PC-3 (cell line): ENCODE measurements at regions of chr6 and their contacts with region 1.

Region 1: DNA sequence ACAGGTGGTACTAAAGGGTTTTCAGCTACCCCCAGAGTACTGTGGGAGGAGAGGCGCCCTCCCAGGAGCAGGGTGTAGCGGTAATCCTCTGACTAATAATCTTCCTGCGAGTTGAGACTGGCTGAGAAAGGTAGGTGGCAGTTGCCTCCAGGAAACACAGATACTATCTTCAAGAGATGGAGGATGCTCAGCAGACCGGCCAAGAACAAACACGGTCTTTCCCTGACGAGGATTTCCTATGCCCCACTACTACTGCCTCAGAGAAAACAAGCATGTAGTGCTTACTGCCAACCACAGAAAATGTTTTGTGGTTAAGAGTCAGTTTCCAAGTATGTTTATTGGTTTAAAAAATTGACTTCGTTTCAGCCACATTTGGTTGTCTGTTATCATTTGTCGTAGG is 26.8 kb downstream of the C6orf89 start:
- DNase-seq: peak; percentile 96
- ATAC-seq: peak; percentile 88
- H3K4me3 ChIP-seq: peak overlapping the region; percentile 35; the same call in 1 of the 2 replicates
- H3K27ac ChIP-seq: peak overlapping the region; percentile 66
- H3K4me1 ChIP-seq: peaks cover 52% of the 10 kb centered on the region
- H3K27me3 ChIP-seq: no peaks in the 10 kb centered on the region
- CTCF ChIP-seq: peak; percentile 40; the same call in 1 of the 2 replicates

Region 2: DNA sequence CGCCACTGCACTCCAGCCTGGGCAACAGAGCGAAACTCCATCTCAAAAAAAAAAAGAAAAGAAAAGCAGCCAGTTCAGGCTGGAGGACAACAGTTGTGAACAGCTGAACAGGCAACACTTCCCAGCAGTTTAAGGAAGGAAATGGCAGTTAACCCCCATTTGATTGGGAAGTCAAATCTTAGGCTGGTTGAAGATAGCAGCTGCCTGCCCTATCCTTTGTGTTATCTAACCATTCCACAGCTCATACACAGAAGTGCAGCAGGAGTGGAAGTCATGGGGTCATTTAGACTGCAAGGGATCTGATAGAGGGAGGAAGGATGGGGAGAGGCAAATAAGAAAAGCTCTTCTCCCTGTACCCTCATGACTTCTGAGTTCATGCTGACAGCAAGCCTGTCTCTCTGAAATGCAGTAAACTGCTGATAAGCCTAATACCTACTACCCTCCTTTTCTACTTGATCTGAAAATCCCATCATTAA is 434.5 kb before region 1 on chr6:
- CTCF ChIA-PET with region 1: no interaction called
- POLR2A ChIA-PET with region 1: no interaction called
- intact Hi-C with region 1: no loop called
- DNase-seq: no peak
- ATAC-seq: no peak
- H3K4me3 ChIP-seq: no peak overlapping the region
- H3K27ac ChIP-seq: no peak overlapping the region
- H3K4me1 ChIP-seq: no peaks in the 10 kb centered on the region
- H3K27me3 ChIP-seq: no peaks in the 10 kb centered on the region
- CTCF ChIP-seq: no peak

Region 3: GRCh38 chr6:36839749-36840431 is 72.7 kb before region 1 on chr6:
- CTCF ChIA-PET with region 1: no interaction called
- POLR2A ChIA-PET with region 1: no interaction called
- intact Hi-C with region 1: no loop called
- DNase-seq: peak; percentile 22
- ATAC-seq: peak; percentile 56
- H3K4me3 ChIP-seq: peak overlapping the region; percentile 59
- H3K27ac ChIP-seq: no peak overlapping the region
- H3K4me1 ChIP-seq: peaks cover 5% of the 10 kb centered on the region; the same call in 1 of the 2 replicates
- H3K27me3 ChIP-seq: peaks cover 21% of the 10 kb centered on the region
- CTCF ChIP-seq: peak; percentile 19; the same call in 1 of the 2 replicates

Region 4: GRCh38 chr6:36955671-36956445 is 43.3 kb after region 1 on chr6:
- CTCF ChIA-PET with region 1: interaction called, 6 read pairs
- POLR2A ChIA-PET with region 1: no interaction called
- intact Hi-C with region 1: loop called (anchors 5 kb)
- DNase-seq: peak; percentile 81
- ATAC-seq: peak; percentile 81
- H3K4me3 ChIP-seq: no peak overlapping the region
- H3K27ac ChIP-seq: peak overlapping the region; percentile 40
- H3K4me1 ChIP-seq: peaks cover 25% of the 10 kb centered on the region
- H3K27me3 ChIP-seq: no peaks in the 10 kb centered on the region
- CTCF ChIP-seq: no peak

Region 5: GRCh38 chr6:36985808-36986703 is 73.5 kb after region 1 on chr6 and contains the start of gene MTCH1:
- CTCF ChIA-PET with region 1: interaction called, 8 read pairs
- POLR2A ChIA-PET with region 1: no interaction called
- intact Hi-C with region 1: loop called (anchors 5 kb)
- DNase-seq: peak; percentile 92
- ATAC-seq: peak; percentile 89
- H3K4me3 ChIP-seq: peak within 1 kb of the TSS; percentile 99
- H3K27ac ChIP-seq: peak within 1 kb of the TSS; percentile 52
- H3K4me1 ChIP-seq: peaks cover 24% of the 10 kb centered on the region
- H3K27me3 ChIP-seq: no peaks in the 10 kb centered on the region
- CTCF ChIP-seq: no peak
- total RNA-seq, gene MTCH1: 253 and 264 TPM in 2 replicates

Region 6: GRCh38 chr6:37047689-37048402 is 135.3 kb after region 1 on chr6:
- CTCF ChIA-PET with region 1: no interaction called
- POLR2A ChIA-PET with region 1: no interaction called
- intact Hi-C with region 1: no loop called
- DNase-seq: no peak
- ATAC-seq: no peak
- H3K4me3 ChIP-seq: no peak overlapping the region
- H3K27ac ChIP-seq: no peak overlapping the region
- H3K4me1 ChIP-seq: peaks cover 10% of the 10 kb centered on the region
- H3K27me3 ChIP-seq: no peaks in the 10 kb centered on the region
- CTCF ChIP-seq: no peak